K562 (cell line): ENCODE measurements at regions of chr2 and their contacts with region 1.

Region 1: DNA sequence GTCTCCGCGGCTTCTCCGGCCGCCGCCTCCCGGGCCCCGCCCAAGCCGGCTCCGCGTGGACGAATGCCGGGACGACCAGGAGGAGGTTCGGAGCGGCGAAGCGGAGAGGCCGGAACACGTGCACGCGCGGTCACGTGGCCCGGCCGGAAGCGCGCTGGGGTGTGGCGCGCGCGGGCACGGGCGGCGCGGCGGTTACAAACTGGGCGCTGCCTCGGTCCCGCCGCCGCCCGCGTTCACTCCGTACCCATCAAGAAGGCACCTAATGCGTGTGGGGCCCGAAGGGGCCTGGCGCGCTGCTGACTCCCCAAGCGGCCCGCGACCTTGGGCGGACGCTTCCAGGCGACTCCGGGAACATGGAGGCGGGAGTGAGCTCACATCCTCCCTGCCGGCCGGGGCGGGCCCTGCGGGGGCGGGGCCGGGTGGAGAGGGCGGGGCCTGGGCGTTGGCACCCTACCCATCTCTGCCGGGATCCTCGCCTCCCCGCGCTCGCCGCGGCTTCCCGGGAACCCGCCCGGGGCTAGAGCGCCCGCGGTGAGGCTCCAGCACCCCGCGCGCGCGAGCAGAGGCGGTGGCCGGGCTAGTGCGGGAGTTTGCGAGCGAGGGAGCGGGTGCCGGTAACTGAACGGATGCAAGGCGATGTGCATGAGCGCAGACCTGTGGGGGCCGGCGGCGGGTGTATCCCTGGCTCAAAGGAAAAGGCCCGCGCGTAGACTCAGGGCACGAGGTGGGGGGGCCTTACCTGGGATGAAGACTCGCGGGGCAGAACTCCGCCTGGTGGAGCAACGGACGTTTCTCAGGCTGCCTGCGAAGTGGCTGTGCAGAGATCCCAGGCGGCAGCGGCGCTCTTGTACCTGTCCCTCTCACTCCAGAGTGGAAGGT is at the start of gene TMEM185B:
- DNase-seq: peak; percentile 87 to 98 (median 96)
- ATAC-seq: peak; percentile 94
- H3K4me3 ChIP-seq: peak within 1 kb of the TSS; percentile 59
- H3K27ac ChIP-seq: peak within 1 kb of the TSS; percentile 96
- H3K4me1 ChIP-seq: peaks cover 30 to 37% of the 10 kb centered on the region in 2 experiments
- H3K27me3 ChIP-seq: no peaks in the 10 kb centered on the region; a peak in 1 of 5 replicates
- CTCF ChIP-seq: peak in 2 of 3 experiments; percentile 33 to 49; a peak in 4 of 6 replicates
- EP300 ChIP-seq: no peak
- POLR2A ChIP-seq: peak; percentile 86
- RAD21 ChIP-seq: peak in 1 of 2 experiments; percentile 28; a peak in 3 of 4 replicates
- polyA plus RNA-seq, gene TMEM185B: 2.9 to 3.2 TPM

Region 2: GRCh38 chr2:120237491-120237902 is 14.2 kb after region 1 on chr2:
- CTCF ChIA-PET with region 1: no interaction called
- POLR2A ChIA-PET with region 1: interaction called, 10 read pairs
- in situ Hi-C with region 1: no loop called
- intact Hi-C with region 1: no loop called
- DNase-seq: peak; percentile 45 to 62 (median 56)
- ATAC-seq: peak; percentile 75
- H3K4me3 ChIP-seq: no peak overlapping the region
- H3K27ac ChIP-seq: no peak overlapping the region
- H3K4me1 ChIP-seq: peaks cover 18 to 23% of the 10 kb centered on the region in 2 experiments
- H3K27me3 ChIP-seq: no peaks in the 10 kb centered on the region
- CTCF ChIP-seq: no peak
- EP300 ChIP-seq: no peak
- POLR2A ChIP-seq: no peak
- RAD21 ChIP-seq: no peak